WTC11 (cell line): ENCODE measurements at regions of chr12 and their contacts with region 1.

Region 1: GRCh38 chr12:124036674-124037109 is 63.7 kb downstream of the ZNF664 start:
- DNase-seq: no peak
- ATAC-seq: peak; percentile 64
- H3K4me3 Mint-ChIP-seq: no peak overlapping the region
- H3K27ac Mint-ChIP-seq: no peak overlapping the region
- H3K4me1 Mint-ChIP-seq: peaks cover 19% of the 10 kb centered on the region
- H3K27me3 Mint-ChIP-seq: no peaks in the 10 kb centered on the region
- CTCF ChIP-seq: peak; percentile 94

Region 2: GRCh38 chr12:123995023-123995748 is 41.5 kb before region 1 on chr12:
- CTCF ChIA-PET with region 1: interaction called, 10 read pairs
- POLR2A ChIA-PET with region 1: no interaction called
- DNase-seq: no peak
- ATAC-seq: no peak
- H3K4me3 Mint-ChIP-seq: no peak overlapping the region
- H3K27ac Mint-ChIP-seq: no peak overlapping the region
- H3K4me1 Mint-ChIP-seq: peaks cover 23% of the 10 kb centered on the region
- H3K27me3 Mint-ChIP-seq: no peaks in the 10 kb centered on the region
- CTCF ChIP-seq: no peak

Region 3: DNA sequence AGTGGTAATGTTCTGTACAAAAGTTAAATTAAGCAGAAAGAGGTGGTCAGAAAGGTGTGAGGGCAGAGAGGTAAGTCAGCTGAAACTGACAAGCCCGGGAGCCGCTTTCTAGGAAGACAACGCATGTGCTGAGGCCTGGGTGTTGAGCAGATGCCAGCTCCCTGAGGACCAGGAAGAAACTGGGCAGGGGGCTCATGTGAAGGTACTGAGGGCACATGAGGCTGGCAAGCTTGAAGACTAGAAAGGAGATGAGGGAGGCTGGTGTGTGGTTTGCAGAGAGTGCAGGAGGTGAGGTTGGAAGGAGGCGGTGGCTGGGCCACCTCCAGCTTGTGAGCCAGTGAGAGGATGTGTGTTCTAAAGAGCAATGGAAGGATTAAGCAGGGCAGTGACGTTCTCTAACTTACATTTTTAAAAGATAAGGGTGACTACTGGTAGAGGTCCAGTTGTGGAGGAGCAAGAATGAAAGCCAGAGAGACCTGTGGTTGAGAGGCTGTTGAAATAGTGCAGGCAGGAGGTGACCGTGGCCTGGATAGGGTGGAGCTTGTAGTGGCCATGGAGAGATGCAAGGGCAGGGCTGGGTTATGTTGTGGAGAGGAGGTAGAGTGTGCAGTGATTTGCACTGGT is 34.6 kb before region 1 on chr12:
- CTCF ChIA-PET with region 1: interaction called, 10 read pairs
- POLR2A ChIA-PET with region 1: no interaction called
- DNase-seq: no peak
- ATAC-seq: no peak
- H3K4me3 Mint-ChIP-seq: no peak overlapping the region
- H3K27ac Mint-ChIP-seq: no peak overlapping the region
- H3K4me1 Mint-ChIP-seq: peaks cover 9% of the 10 kb centered on the region; the same call in 1 of the 2 replicates
- H3K27me3 Mint-ChIP-seq: no peaks in the 10 kb centered on the region
- CTCF ChIP-seq: no peak

Region 4: DNA sequence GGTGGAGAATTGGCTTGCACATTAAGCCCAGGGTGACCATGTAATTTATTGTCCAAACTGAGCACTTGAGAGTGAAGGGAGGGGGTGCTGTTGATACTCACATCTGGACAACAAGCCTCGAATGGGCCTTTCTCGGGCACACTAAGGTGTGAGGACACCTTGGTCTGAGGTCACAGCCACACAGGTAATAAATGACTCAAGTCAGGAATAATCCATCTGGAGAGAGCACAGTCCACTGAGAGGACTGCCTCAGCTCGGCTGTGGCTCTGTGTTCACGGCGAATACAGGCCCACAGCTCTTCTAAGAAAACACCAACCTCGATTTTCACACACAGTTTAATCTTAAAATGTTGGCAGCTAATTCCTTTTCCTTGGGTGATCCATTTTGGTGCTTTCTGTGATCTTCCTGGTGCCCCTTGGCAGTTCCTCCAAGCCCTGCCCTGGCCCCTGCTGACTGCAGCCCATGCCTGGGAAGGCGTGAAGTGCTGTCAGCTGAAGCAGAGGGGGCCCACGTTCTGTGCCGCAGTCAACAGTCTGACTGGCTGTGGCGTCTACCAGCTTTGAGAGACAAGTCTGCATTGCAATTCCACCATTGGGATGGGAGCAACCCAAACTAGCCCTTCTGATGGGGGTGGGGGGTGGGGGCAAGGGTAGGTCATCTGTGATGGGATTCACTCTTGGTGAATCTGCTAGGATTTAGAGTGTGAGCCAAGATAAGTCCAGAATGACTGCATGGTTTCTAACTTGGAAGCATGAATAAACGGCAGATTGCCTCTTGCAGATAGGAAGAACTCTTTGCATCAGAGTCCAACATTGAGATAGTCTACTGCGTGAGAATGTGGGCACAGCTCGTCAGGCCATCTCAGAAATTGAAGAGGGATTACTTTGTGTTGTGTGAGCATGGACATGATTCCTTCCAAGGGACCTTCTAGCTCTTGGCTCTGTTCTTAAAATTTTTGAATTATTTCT is 20.9 kb before region 1 on chr12:
- CTCF ChIA-PET with region 1: interaction called, 24 read pairs
- POLR2A ChIA-PET with region 1: no interaction called
- DNase-seq: no peak
- ATAC-seq: no peak
- H3K4me3 Mint-ChIP-seq: no peak overlapping the region
- H3K27ac Mint-ChIP-seq: no peak overlapping the region; the same call in 1 of the 2 replicates
- H3K4me1 Mint-ChIP-seq: peaks cover 4% of the 10 kb centered on the region
- H3K27me3 Mint-ChIP-seq: no peaks in the 10 kb centered on the region
- CTCF ChIP-seq: no peak

Region 5: DNA sequence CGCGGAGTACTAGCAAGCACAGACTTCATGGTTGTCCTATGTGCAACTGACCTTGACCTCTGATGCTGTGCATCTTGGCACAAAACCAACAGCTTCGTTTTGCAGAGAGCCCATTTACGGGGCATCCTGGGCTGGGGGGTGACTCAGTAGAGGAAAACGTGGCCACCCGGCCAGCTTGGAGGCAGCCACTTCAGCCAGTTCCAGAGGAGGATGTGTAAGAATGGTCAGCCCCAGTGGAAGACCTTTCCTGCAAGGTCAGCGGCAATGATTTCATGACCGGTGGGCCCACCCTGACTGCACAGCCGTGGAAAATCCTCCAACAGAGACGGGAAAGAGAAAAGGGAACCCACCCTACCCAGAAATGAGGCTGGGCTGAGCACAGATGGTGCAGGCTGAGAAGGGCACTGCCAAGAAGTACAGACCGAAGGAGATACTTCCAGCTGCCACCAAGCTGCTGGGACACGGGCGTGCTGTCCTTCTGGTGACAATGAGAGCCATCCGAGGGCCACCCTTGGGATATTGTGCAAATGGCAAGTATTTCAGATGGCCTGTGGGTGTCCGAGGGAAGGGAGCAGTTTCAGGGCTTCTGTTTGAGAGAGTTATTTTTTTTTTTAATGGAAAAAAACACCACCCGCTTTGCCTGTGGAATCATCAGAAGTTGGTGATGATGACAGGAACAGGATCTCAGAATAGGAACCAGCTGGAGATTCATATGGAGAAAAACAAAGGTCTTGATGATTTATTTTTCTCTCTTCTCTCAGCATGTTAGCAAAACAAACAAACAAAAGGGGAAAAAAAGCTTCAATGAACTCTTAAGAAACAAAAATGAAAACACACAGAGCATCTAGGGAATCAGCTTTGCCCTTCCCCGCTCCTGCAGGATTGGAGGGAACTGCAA is 138.0 kb after region 1 on chr12:
- CTCF ChIA-PET with region 1: no interaction called
- POLR2A ChIA-PET with region 1: no interaction called
- DNase-seq: no peak
- ATAC-seq: no peak
- H3K4me3 Mint-ChIP-seq: no peak overlapping the region
- H3K27ac Mint-ChIP-seq: 0 out of 2 replicates have a peak overlapping the region, but pooled peaks have one; percentile 59
- H3K4me1 Mint-ChIP-seq: peaks cover 33% of the 10 kb centered on the region
- H3K27me3 Mint-ChIP-seq: peaks cover 3% of the 10 kb centered on the region
- CTCF ChIP-seq: no peak

Region 6: GRCh38 chr12:124321040-124321481 is 284.4 kb after region 1 on chr12:
- CTCF ChIA-PET with region 1: interaction called, 18 read pairs
- POLR2A ChIA-PET with region 1: interaction called, 4 read pairs
- DNase-seq: peak; percentile 87
- ATAC-seq: peak; percentile 83
- H3K4me3 Mint-ChIP-seq: no peak overlapping the region
- H3K27ac Mint-ChIP-seq: no peak overlapping the region
- H3K4me1 Mint-ChIP-seq: peaks cover 37% of the 10 kb centered on the region
- H3K27me3 Mint-ChIP-seq: peaks cover 6% of the 10 kb centered on the region
- CTCF ChIP-seq: peak; percentile 93

Region 7: DNA sequence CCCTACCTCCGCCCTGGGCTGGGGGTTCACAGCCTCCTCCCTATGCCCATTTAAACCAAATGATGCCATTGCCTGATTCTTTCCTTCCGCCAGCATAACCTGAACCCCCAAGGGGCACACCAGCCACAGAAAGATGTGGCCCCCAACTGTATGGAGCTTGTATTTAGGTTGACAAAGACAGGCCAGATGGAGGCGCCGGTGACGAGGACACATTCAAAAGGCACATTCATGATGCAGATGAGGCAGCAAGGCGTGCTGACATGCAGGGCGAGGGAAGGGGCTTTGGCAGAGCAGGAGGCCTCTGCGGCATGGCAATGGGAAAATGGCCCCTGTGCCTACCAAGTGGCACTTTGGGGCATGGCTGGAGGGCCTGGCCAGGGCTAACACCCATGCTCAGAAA is 370.4 kb after region 1 on chr12:
- CTCF ChIA-PET with region 1: no interaction called
- POLR2A ChIA-PET with region 1: no interaction called
- DNase-seq: peak; percentile 36
- ATAC-seq: no peak
- H3K4me3 Mint-ChIP-seq: no peak overlapping the region
- H3K27ac Mint-ChIP-seq: peak overlapping the region; percentile 84
- H3K4me1 Mint-ChIP-seq: peaks cover 54% of the 10 kb centered on the region
- H3K27me3 Mint-ChIP-seq: no peaks in the 10 kb centered on the region; the same call in 1 of the 2 replicates
- CTCF ChIP-seq: no peak